HCT116 (cell line): ENCODE measurements at regions of chr14 and their contacts with region 1.

Region 1: DNA sequence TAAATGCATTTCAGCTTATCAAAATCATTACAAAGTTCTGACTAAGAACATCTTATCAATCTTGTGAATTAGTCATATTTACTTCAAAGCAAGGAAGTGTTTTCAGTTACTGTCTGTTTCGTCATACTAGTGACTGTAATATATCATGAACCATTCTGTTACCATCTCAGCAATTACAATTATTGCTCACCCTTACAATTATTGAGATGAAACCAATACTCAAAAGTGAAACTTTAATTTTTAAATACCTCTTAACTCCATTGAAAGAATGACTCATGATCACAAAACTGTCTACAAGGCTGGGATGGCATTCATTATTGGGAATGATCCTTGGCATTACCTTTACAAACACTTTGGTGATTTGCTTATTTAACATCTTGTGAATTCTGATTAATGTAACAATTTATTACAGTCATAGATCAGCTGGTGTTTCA is 90.3 kb downstream of the RPS6KA5 start:
- DNase-seq: peak; percentile 95
- ATAC-seq: peak; percentile 85
- H3K4me3 ChIP-seq: peak overlapping the region in 1 of 2 experiments; percentile 15; a peak in 1 of 4 replicates
- H3K27ac ChIP-seq: peak overlapping the region; percentile 86; the same call in 1 of the 2 replicates
- H3K4me1 ChIP-seq: peaks cover 37 to 73% of the 10 kb centered on the region in 2 experiments
- H3K27me3 ChIP-seq: no peaks in the 10 kb centered on the region
- CTCF ChIP-seq: peak in 1 of 3 experiments; percentile 2; a peak in 1 of 6 replicates
- POLR2A ChIP-seq: no peak
- RAD21 ChIP-seq: peak; percentile 37

Region 2: DNA sequence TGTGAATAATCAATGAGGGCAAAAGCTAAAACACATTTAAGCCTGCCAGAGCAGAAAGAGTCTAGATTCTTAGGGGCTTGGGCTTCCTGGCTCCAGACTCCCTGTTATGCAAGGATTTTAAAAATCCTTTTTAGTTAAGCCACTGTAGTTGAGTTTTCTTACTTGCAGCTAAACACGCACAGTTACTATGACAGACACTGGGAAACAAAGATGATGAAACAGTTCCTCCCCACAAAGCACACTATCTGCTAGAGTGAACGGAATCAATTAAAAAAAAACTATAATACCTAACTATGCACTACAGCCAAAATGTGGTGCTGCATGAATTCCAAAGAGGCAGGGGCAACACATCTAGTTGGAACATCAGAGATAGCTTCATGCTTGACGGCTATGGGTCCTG is 62.1 kb after region 1 on chr14:
- CTCF ChIA-PET with region 1: no interaction called
- POLR2A ChIA-PET with region 1: no interaction called
- RAD21 ChIA-PET with region 1: no interaction called
- intact Hi-C with region 1: no loop called
- DNase-seq: no peak
- ATAC-seq: no peak
- H3K4me3 ChIP-seq: no peak overlapping the region
- H3K27ac ChIP-seq: no peak overlapping the region
- H3K4me1 ChIP-seq: peaks cover 11 to 25% of the 10 kb centered on the region in 2 experiments
- H3K27me3 ChIP-seq: no peaks in the 10 kb centered on the region
- CTCF ChIP-seq: no peak
- POLR2A ChIP-seq: no peak
- RAD21 ChIP-seq: no peak

Region 3: GRCh38 chr14:91060351-91061055 is 90.3 kb after region 1 on chr14 and contains the start of gene RPS6KA5:
- CTCF ChIA-PET with region 1: interaction called, 3 read pairs
- POLR2A ChIA-PET with region 1: interaction called, 4 read pairs
- RAD21 ChIA-PET with region 1: no interaction called
- intact Hi-C with region 1: loop called (anchors 2 kb)
- DNase-seq: peak; percentile 100
- ATAC-seq: peak; percentile 89
- H3K4me3 ChIP-seq: peak within 1 kb of the TSS; percentile 80 to 84
- H3K27ac ChIP-seq: peak within 1 kb of the TSS; percentile 84
- H3K4me1 ChIP-seq: peaks cover 20 to 44% of the 10 kb centered on the region in 2 experiments
- H3K27me3 ChIP-seq: no peaks in the 10 kb centered on the region
- CTCF ChIP-seq: no peak
- POLR2A ChIP-seq: no peak
- RAD21 ChIP-seq: peak; percentile 25; the same call in 1 of the 2 replicates
- total RNA-seq, gene RPS6KA5: 24.2 TPM

Region 4: GRCh38 chr14:91114079-91115065 is 144.2 kb after region 1 on chr14:
- CTCF ChIA-PET with region 1: no interaction called
- POLR2A ChIA-PET with region 1: no interaction called
- RAD21 ChIA-PET with region 1: no interaction called
- intact Hi-C with region 1: loop called (anchors 1 kb)
- DNase-seq: peak; percentile 68
- ATAC-seq: peak; percentile 91
- H3K4me3 ChIP-seq: peak overlapping the region; percentile 76 to 80
- H3K27ac ChIP-seq: peak overlapping the region; percentile 85
- H3K4me1 ChIP-seq: peaks cover 25 to 64% of the 10 kb centered on the region in 2 experiments
- H3K27me3 ChIP-seq: no peaks in the 10 kb centered on the region
- CTCF ChIP-seq: no peak
- POLR2A ChIP-seq: peak; percentile 28
- RAD21 ChIP-seq: no peak

Region 5: GRCh38 chr14:91140672-91141071 is 170.5 kb after region 1 on chr14:
- CTCF ChIA-PET with region 1: no interaction called
- POLR2A ChIA-PET with region 1: no interaction called
- RAD21 ChIA-PET with region 1: no interaction called
- intact Hi-C with region 1: no loop called
- DNase-seq: peak; percentile 41
- ATAC-seq: peak; percentile 85
- H3K4me3 ChIP-seq: no peak overlapping the region
- H3K27ac ChIP-seq: no peak overlapping the region
- H3K4me1 ChIP-seq: peaks cover 4 to 30% of the 10 kb centered on the region in 2 experiments; a peak in 3 of 4 replicates
- H3K27me3 ChIP-seq: no peaks in the 10 kb centered on the region
- CTCF ChIP-seq: peak; percentile 65 to 79 (median 74); a peak in 5 of 6 replicates
- POLR2A ChIP-seq: no peak
- RAD21 ChIP-seq: peak; percentile 82

Region 6: DNA sequence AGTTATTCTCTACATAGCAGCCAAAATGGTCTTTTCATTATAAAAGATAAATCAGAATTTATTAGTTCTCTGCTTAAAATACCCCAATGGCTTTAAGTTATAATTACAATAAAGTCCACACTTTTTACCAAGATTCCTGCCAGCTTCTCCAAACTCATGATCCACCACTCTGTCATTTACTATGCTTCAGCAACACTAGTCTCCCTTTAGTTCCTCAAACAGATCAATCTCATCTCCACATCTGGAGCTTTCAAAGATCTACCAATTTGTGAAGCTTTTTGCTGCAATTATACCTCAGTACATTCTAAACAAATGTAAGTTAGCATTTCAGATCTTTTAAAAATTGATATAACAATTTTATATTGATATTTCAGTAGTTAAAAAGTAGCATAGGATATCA is 736.8 kb after region 1 on chr14:
- CTCF ChIA-PET with region 1: no interaction called
- POLR2A ChIA-PET with region 1: no interaction called
- RAD21 ChIA-PET with region 1: no interaction called
- intact Hi-C with region 1: no loop called
- DNase-seq: no peak
- ATAC-seq: no peak
- H3K4me3 ChIP-seq: no peak overlapping the region
- H3K27ac ChIP-seq: no peak overlapping the region
- H3K4me1 ChIP-seq: no peaks in the 10 kb centered on the region
- H3K27me3 ChIP-seq: no peaks in the 10 kb centered on the region
- CTCF ChIP-seq: no peak
- POLR2A ChIP-seq: no peak
- RAD21 ChIP-seq: no peak